ENCODE measurements at regions of chr3 and their contacts with region 1.

Region 1: GRCh38 chr3:179196098-179196497 is 47.9 kb downstream of the PIK3CA start:
- DNase-seq: no peak
- H3K4me3 Mint-ChIP-seq: no peak overlapping the region
- H3K27ac Mint-ChIP-seq: no peak overlapping the region
- H3K4me1 Mint-ChIP-seq: no peaks in the 10 kb centered on the region
- H3K27me3 Mint-ChIP-seq: no peaks in the 10 kb centered on the region
- CTCF ChIP-seq: no peak

Region 2: GRCh38 chr3:179181021-179181472 is 15.1 kb before region 1 on chr3:
- CTCF ChIA-PET with region 1: no interaction called
- intact Hi-C with region 1: loop called (anchors 1 kb)
- DNase-seq: no peak
- H3K4me3 Mint-ChIP-seq: no peak overlapping the region
- H3K27ac Mint-ChIP-seq: no peak overlapping the region
- H3K4me1 Mint-ChIP-seq: no peaks in the 10 kb centered on the region
- H3K27me3 Mint-ChIP-seq: no peaks in the 10 kb centered on the region
- CTCF ChIP-seq: no peak

Measured in Calu3 (cell line).